ENCODE measurements at regions of chr1 and their contacts with region 1.

Region 1: GRCh38 chr1:36149237-36149972 is at the start of gene TRAPPC3:
- DNase-seq: peak; percentile 99 to 100 (median 99)
- H3K4me3 ChIP-seq: peak within 1 kb of the TSS; percentile 70 to 98
- H3K4me3 Mint-ChIP-seq: peak within 1 kb of the TSS; percentile 95 to 100 (median 98)
- H3K27ac ChIP-seq: peak within 1 kb of the TSS; percentile 88
- H3K27ac Mint-ChIP-seq: peak within 1 kb of the TSS; percentile 94 to 100 (median 99)
- H3K4me1 ChIP-seq: peaks cover 68% of the 10 kb centered on the region
- H3K4me1 Mint-ChIP-seq: peaks cover 46 to 84% (median 63%) of the 10 kb centered on the region in 4 donors
- H3K27me3 ChIP-seq: no peaks in the 10 kb centered on the region
- H3K27me3 Mint-ChIP-seq: no peaks in the 10 kb centered on the region
- total RNA-seq, gene TRAPPC3: 51.8 to 56.4 TPM

Region 2: GRCh38 chr1:36088575-36089443 is 60.6 kb before region 1 on chr1 and contains the start of gene ADPRS:
- CTCF ChIA-PET with region 1: interaction called, 3 read pairs
- POLR2A ChIA-PET with region 1: interaction called, 7 read pairs
- intact Hi-C with region 1: loop called (anchors 1 kb)
- DNase-seq: peak; percentile 88 to 91 (median 89)
- H3K4me3 ChIP-seq: peak within 1 kb of the TSS; percentile 29 to 87
- H3K4me3 Mint-ChIP-seq: peak within 1 kb of the TSS; percentile 87 to 98 (median 92)
- H3K27ac ChIP-seq: peak within 1 kb of the TSS; percentile 92
- H3K27ac Mint-ChIP-seq: peak within 1 kb of the TSS; percentile 88 to 99 (median 96)
- H3K4me1 ChIP-seq: peaks cover 18% of the 10 kb centered on the region
- H3K4me1 Mint-ChIP-seq: peaks cover 11 to 38% (median 15%) of the 10 kb centered on the region in 4 donors
- H3K27me3 ChIP-seq: no peaks in the 10 kb centered on the region
- H3K27me3 Mint-ChIP-seq: peaks cover 6 to 14% of the 10 kb centered on the region in 2 donors
- total RNA-seq, gene ADPRS: 26.7 to 28.6 TPM

Region 3: GRCh38 chr1:36114371-36114770 is 35.0 kb before region 1 on chr1:
- CTCF ChIA-PET with region 1: no interaction called
- POLR2A ChIA-PET with region 1: no interaction called
- intact Hi-C with region 1: no loop called
- DNase-seq: no peak
- H3K4me3 ChIP-seq: no peak overlapping the region
- H3K4me3 Mint-ChIP-seq: no peak overlapping the region
- H3K27ac ChIP-seq: no peak overlapping the region
- H3K27ac Mint-ChIP-seq: peak overlapping the region in 1 of 7 donors; percentile 60
- H3K4me1 ChIP-seq: peaks cover 3% of the 10 kb centered on the region
- H3K4me1 Mint-ChIP-seq: peaks cover 3 to 12% (median 4%) of the 10 kb centered on the region in 4 donors
- H3K27me3 ChIP-seq: no peaks in the 10 kb centered on the region
- H3K27me3 Mint-ChIP-seq: peaks cover 0 to 2% of the 10 kb centered on the region in 2 donors

Region 4: DNA sequence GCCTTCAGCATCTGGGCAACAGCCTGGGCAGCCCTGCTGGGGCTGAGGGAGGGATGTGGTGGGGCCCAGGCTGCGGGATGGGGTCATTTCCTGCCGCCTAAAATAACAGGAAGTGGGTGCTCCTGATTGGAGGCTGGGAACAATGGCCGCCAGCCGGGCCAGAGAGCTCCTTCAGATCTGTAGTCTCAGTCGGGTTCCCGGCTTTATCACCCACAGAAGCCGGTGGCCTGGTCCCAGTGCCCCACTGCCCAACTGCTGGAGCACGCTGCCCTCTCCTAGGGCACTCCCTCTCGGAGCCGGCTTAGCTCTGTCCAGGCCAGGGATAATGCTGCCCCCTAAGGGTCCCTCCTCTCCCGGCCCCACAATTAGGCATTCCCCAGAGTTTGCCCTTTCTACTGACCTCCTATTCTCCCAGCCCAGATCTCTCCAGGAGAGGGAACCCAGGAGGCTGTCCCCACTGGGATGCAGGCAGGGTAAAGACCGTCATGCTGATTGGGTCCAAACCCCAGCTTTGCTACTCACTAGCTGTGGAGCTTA is 11.6 kb after region 1 on chr1:
- CTCF ChIA-PET with region 1: interaction called, 82 read pairs
- POLR2A ChIA-PET with region 1: interaction called, 251 read pairs
- intact Hi-C with region 1: loop called (anchors 1 kb)
- DNase-seq: peak; percentile 57 to 72 (median 67)
- H3K4me3 ChIP-seq: peak overlapping the region; percentile 53 to 62
- H3K4me3 Mint-ChIP-seq: peak overlapping the region; percentile 80 to 91 (median 86)
- H3K27ac ChIP-seq: peak overlapping the region; percentile 78
- H3K27ac Mint-ChIP-seq: peak overlapping the region; percentile 93 to 99 (median 98)
- H3K4me1 ChIP-seq: peaks cover 75% of the 10 kb centered on the region
- H3K4me1 Mint-ChIP-seq: peaks cover 53 to 83% (median 66%) of the 10 kb centered on the region in 4 donors
- H3K27me3 ChIP-seq: no peaks in the 10 kb centered on the region
- H3K27me3 Mint-ChIP-seq: no peaks in the 10 kb centered on the region

Region 5: GRCh38 chr1:36187800-36188593 is 38.6 kb after region 1 on chr1:
- CTCF ChIA-PET with region 1: interaction called, 348 read pairs
- POLR2A ChIA-PET with region 1: interaction called, 244 read pairs
- intact Hi-C with region 1: loop called (anchors 1 kb)
- DNase-seq: peak; percentile 80 to 87 (median 83)
- H3K4me3 ChIP-seq: no peak overlapping the region
- H3K4me3 Mint-ChIP-seq: no peak overlapping the region
- H3K27ac ChIP-seq: no peak overlapping the region
- H3K27ac Mint-ChIP-seq: peak overlapping the region; percentile 52 to 92 (median 87)
- H3K4me1 ChIP-seq: peaks cover 5% of the 10 kb centered on the region
- H3K4me1 Mint-ChIP-seq: peaks cover 8 to 11% (median 10%) of the 10 kb centered on the region in 4 donors
- H3K27me3 ChIP-seq: no peaks in the 10 kb centered on the region
- H3K27me3 Mint-ChIP-seq: no peaks in the 10 kb centered on the region

Region 6: DNA sequence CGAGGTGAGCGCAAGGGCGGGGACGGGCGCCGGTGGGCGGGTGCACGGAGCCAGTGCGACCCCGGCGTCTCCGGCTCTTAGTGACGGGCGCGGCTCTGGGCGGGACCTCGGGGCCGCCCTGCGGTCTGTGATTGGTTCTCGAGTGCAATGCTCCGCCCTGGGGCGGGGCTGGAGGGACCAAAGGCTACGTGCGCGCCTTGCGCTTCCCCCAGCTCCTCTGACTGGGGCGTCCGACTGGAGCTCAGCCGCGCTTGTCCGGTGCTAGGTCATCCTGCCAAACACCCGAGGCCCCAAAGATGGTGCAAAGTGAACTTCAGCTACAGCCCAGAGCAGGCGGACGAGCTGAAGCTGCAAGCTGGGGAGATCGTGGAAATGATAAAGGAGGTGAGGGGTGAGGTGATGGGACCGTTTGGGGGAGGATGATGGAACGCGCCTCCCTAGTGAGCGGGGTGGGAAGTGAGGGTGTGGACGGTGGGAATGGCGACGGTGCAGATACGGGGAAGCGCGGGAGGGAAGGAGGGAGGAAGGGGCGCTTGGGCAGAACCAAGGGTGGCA is 157.6 kb after region 1 on chr1:
- CTCF ChIA-PET with region 1: interaction called, 3 read pairs
- POLR2A ChIA-PET with region 1: interaction called, 21 read pairs
- intact Hi-C with region 1: no loop called
- DNase-seq: peak; percentile 90 to 94 (median 92)
- H3K4me3 ChIP-seq: peak overlapping the region; percentile 77 to 81
- H3K4me3 Mint-ChIP-seq: peak overlapping the region; percentile 91 to 99 (median 94)
- H3K27ac ChIP-seq: peak overlapping the region; percentile 73
- H3K27ac Mint-ChIP-seq: peak overlapping the region; percentile 74 to 96 (median 92)
- H3K4me1 ChIP-seq: peaks cover 23% of the 10 kb centered on the region
- H3K4me1 Mint-ChIP-seq: peaks cover 5 to 21% (median 11%) of the 10 kb centered on the region in 4 donors
- H3K27me3 ChIP-seq: no peaks in the 10 kb centered on the region
- H3K27me3 Mint-ChIP-seq: no peaks in the 10 kb centered on the region

Region 7: DNA sequence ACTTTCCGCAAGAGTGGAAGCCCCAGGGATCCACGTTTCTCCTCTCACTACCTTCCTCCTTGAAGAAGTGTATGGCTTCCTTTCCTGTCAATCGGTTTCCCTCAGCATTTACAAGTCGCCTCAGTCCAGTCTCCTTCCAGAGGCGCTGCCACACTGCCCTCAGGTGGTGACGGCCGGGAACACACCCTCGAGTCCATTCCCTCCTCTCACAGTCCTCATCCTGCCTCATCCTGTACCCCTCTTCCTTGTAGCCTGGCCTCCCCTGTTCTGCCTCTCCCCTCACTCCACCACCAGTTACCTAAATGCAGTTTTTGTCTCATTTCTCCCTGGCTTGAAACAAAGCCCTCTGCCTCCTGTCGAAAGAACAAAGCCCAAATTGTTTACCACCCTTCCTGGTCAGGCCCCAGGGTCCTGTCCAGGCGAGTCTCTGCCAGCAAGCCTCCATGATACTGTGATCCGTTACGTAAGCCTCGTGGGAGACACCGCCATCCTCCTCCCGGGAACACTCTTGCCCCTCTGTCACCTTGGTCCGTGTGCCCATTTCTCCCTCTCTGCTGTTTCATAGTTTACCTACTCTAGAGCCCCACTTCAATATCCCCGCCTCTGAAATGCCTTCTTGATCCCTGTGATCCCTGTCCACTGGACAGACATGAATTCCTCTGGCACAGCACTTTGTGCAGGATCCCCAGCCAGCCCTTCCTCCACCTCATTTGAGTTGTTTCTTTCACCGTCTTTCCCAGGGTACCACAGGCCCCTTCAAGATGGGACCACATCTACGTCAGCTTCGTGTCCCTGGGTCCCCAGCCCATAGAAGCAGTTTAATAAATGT is 271.6 kb after region 1 on chr1:
- CTCF ChIA-PET with region 1: interaction called, 6 read pairs
- POLR2A ChIA-PET with region 1: no interaction called
- intact Hi-C with region 1: loop called (anchors 1 kb)
- DNase-seq: peak; percentile 83 to 88 (median 86)
- H3K4me3 ChIP-seq: no peak overlapping the region
- H3K4me3 Mint-ChIP-seq: peak overlapping the region; percentile 49 to 84 (median 74)
- H3K27ac ChIP-seq: peak overlapping the region; percentile 30
- H3K27ac Mint-ChIP-seq: peak overlapping the region; percentile 82 to 97 (median 94)
- H3K4me1 ChIP-seq: peaks cover 21% of the 10 kb centered on the region
- H3K4me1 Mint-ChIP-seq: peaks cover 19 to 29% (median 22%) of the 10 kb centered on the region in 4 donors
- H3K27me3 ChIP-seq: no peaks in the 10 kb centered on the region
- H3K27me3 Mint-ChIP-seq: no peaks in the 10 kb centered on the region

Region 8: GRCh38 chr1:36436817-36437216 is 287.4 kb after region 1 on chr1:
- CTCF ChIA-PET with region 1: no interaction called
- POLR2A ChIA-PET with region 1: no interaction called
- intact Hi-C with region 1: no loop called
- DNase-seq: no peak
- H3K4me3 ChIP-seq: no peak overlapping the region
- H3K4me3 Mint-ChIP-seq: no peak overlapping the region
- H3K27ac ChIP-seq: no peak overlapping the region
- H3K27ac Mint-ChIP-seq: no peak overlapping the region
- H3K4me1 ChIP-seq: no peaks in the 10 kb centered on the region
- H3K4me1 Mint-ChIP-seq: no peaks in the 10 kb centered on the region
- H3K27me3 ChIP-seq: no peaks in the 10 kb centered on the region
- H3K27me3 Mint-ChIP-seq: no peaks in the 10 kb centered on the region

Measured in CD4-positive, alpha-beta memory T cell (primary cell).